ENCODE measurements at regions of chr16 and their contacts with region 1.

Region 1: GRCh38 chr16:79601931-79602627 is 1.5 kb upstream of the MAF start:
- DNase-seq: peak; percentile 50 to 67 (median 62)
- H3K4me3 ChIP-seq: peak overlapping the region; percentile 47 to 88 (median 76)
- H3K4me3 Mint-ChIP-seq: peak overlapping the region; percentile 93 to 98
- H3K27ac ChIP-seq: peak overlapping the region in 1 of 2 donors; percentile 4
- H3K27ac Mint-ChIP-seq: peak overlapping the region in 2 of 7 donors; percentile 42 to 84
- H3K4me1 ChIP-seq: peaks cover 28 to 39% of the 10 kb centered on the region in 2 donors
- H3K4me1 Mint-ChIP-seq: peaks cover 37% of the 10 kb centered on the region
- H3K27me3 ChIP-seq: peaks cover 17 to 29% of the 10 kb centered on the region in 2 donors
- H3K27me3 Mint-ChIP-seq: peaks cover 30 to 46% (median 36%) of the 10 kb centered on the region in 3 donors
- CTCF ChIP-seq: peak; percentile 91

Region 2: DNA sequence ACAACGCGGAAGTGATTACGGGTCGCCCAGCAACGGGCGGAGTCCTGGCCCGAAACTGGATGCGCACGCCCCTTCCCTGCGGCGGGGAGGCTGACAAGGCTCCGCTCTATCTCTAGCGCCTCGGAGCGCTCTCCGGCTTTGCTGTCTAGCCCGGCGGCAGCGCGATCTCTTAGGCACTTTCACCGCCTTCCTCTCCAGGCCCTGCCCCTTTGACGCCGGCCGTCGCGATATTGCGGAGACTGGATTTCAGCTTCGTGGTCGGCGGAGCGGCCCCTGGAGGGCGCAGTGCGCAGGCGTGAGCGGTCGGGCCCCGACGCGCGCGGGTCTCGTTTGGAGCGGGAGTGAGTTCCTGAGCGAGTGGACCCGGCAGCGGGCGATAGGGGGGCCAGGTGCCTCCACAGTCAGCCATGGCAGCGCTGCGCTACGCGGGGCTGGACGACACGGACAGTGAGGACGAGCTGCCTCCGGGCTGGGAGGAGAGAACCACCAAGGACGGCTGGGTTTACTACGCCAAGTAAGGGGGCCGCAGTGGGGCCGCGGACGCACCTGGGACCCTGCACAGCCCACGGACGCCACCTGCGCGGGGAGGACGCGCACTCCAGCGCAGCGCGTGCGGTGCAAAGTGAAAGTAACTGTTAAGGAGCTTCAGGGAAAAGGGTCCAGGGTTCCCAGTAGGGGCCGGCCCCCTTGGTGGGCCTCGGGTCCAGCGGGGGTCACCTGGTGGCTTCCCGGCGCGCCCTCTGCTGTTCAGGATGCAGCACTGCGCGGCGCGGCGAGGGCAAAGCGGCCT is 1502.5 kb before region 1 on chr16 and contains the start of gene WWOX:
- intact Hi-C with region 1: loop called in 1 of 2 experiments (anchors 10 kb)
- DNase-seq: peak; percentile 96 to 98 (median 96)
- H3K4me3 ChIP-seq: peak within 1 kb of the TSS; percentile 78 to 99 (median 93)
- H3K4me3 Mint-ChIP-seq: peak within 1 kb of the TSS; percentile 90 to 95
- H3K27ac ChIP-seq: peak within 1 kb of the TSS; percentile 88
- H3K27ac Mint-ChIP-seq: peak within 1 kb of the TSS; percentile 83 to 94 (median 92)
- H3K4me1 ChIP-seq: peaks cover 14 to 17% of the 10 kb centered on the region in 2 donors
- H3K4me1 Mint-ChIP-seq: peaks cover 12% of the 10 kb centered on the region
- H3K27me3 ChIP-seq: no peaks in the 10 kb centered on the region
- H3K27me3 Mint-ChIP-seq: peaks cover 1 to 5% (median 2%) of the 10 kb centered on the region in 3 donors
- CTCF ChIP-seq: peak; percentile 94
- polyA plus RNA-seq, gene WWOX: 4.0 to 7.0 (median 6.3) TPM

Region 3: DNA sequence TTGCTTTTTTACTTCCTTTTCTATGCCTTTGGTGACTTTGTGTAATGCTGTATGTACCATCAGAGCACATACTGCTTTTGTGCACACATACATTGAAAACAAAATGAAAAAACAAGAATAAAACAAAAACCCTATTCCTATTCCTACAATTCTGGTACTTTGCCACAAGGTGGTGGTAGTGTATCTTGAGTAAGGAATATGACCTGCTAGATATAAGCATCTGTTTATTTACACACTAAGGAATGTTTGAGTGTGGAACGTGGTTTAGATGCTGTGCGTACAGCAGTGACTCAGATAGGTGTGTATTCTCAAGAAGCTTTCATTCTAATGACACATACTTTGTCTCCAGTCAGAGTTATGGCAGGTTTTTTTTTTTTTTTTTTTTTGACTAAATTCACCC is 896.4 kb before region 1 on chr16:
- intact Hi-C with region 1: loop called in 1 of 2 experiments (anchors 10 kb)
- DNase-seq: peak; percentile 7 to 45 (median 39)
- H3K4me3 ChIP-seq: no peak overlapping the region
- H3K4me3 Mint-ChIP-seq: no peak overlapping the region
- H3K27ac ChIP-seq: no peak overlapping the region
- H3K27ac Mint-ChIP-seq: no peak overlapping the region
- H3K4me1 ChIP-seq: no peaks in the 10 kb centered on the region
- H3K4me1 Mint-ChIP-seq: no peaks in the 10 kb centered on the region
- H3K27me3 ChIP-seq: no peaks in the 10 kb centered on the region
- H3K27me3 Mint-ChIP-seq: peaks cover 0 to 2% (median 0%) of the 10 kb centered on the region in 3 donors
- CTCF ChIP-seq: peak; percentile 68

Region 4: GRCh38 chr16:79089735-79090284 is 512.3 kb before region 1 on chr16:
- intact Hi-C with region 1: loop called in 1 of 2 experiments (anchors 5 kb)
- DNase-seq: peak; percentile 39 to 65 (median 63)
- H3K4me3 ChIP-seq: peak overlapping the region; percentile 41 to 72 (median 50)
- H3K4me3 Mint-ChIP-seq: peak overlapping the region; percentile 83 to 92
- H3K27ac ChIP-seq: peak overlapping the region; percentile 11 to 58
- H3K27ac Mint-ChIP-seq: peak overlapping the region; percentile 80 to 93 (median 87)
- H3K4me1 ChIP-seq: peaks cover 55 to 58% of the 10 kb centered on the region in 2 donors
- H3K4me1 Mint-ChIP-seq: peaks cover 61% of the 10 kb centered on the region
- H3K27me3 ChIP-seq: no peaks in the 10 kb centered on the region
- H3K27me3 Mint-ChIP-seq: peaks cover 0 to 5% (median 0%) of the 10 kb centered on the region in 3 donors
- CTCF ChIP-seq: no peak

Region 5: DNA sequence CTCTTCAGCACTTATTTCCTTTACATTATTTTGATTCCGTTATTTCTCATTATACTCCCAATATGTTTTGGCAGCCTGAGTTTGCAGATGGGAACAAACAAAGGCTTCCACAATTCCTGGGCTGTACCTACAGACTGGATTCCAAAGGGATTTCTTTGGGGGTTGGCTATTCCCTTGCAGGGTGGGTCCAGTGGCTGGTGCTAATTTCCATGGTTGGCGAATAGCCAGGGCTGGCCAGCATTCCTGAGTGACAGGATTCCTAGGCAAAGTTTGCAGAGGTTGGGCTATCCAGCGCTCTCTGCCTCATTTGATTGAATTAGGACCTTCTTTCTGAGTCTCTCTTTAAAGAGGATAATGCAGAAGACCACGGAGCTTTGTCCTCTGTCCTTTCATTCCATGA is 209.0 kb before region 1 on chr16:
- intact Hi-C with region 1: loop called in 1 of 2 experiments (anchors 10 kb)
- DNase-seq: no peak
- H3K4me3 ChIP-seq: no peak overlapping the region
- H3K4me3 Mint-ChIP-seq: no peak overlapping the region
- H3K27ac ChIP-seq: no peak overlapping the region
- H3K27ac Mint-ChIP-seq: no peak overlapping the region
- H3K4me1 ChIP-seq: peaks cover 24 to 25% of the 10 kb centered on the region in 2 donors
- H3K4me1 Mint-ChIP-seq: peaks cover 23% of the 10 kb centered on the region
- H3K27me3 ChIP-seq: no peaks in the 10 kb centered on the region
- H3K27me3 Mint-ChIP-seq: peaks cover 2 to 18% (median 6%) of the 10 kb centered on the region in 3 donors
- CTCF ChIP-seq: no peak

Region 6: GRCh38 chr16:79554912-79555311 is 47.2 kb before region 1 on chr16:
- intact Hi-C with region 1: no loop called
- DNase-seq: no peak
- H3K4me3 ChIP-seq: no peak overlapping the region
- H3K4me3 Mint-ChIP-seq: no peak overlapping the region
- H3K27ac ChIP-seq: no peak overlapping the region
- H3K27ac Mint-ChIP-seq: no peak overlapping the region
- H3K4me1 ChIP-seq: peaks cover 0 to 6% of the 10 kb centered on the region in 2 donors
- H3K4me1 Mint-ChIP-seq: peaks cover 8% of the 10 kb centered on the region
- H3K27me3 ChIP-seq: no peaks in the 10 kb centered on the region
- H3K27me3 Mint-ChIP-seq: peaks cover 0 to 6% (median 2%) of the 10 kb centered on the region in 3 donors
- CTCF ChIP-seq: no peak